Heart right ventricle (tissue), 16 donors: ENCODE measurements at regions of chr4 and their contacts with region 1.

Region 1: GRCh38 chr4:98467627-98468072 is 190.8 kb downstream of the TSPAN5 start:
- DNase-seq: peak; percentile 40 to 77
- ATAC-seq: peak; percentile 87 to 95 (median 91)
- H3K4me3 ChIP-seq: peak overlapping the region; percentile 24 to 53 (median 44)
- H3K27ac ChIP-seq: no peak overlapping the region
- H3K4me1 ChIP-seq: peaks cover 0 to 28% (median 17%) of the 10 kb centered on the region in 9 donors
- H3K27me3 ChIP-seq: no peaks in the 10 kb centered on the region
- CTCF ChIP-seq: peak; percentile 36 to 86 (median 75)

Region 2: GRCh38 chr4:98626350-98626749 is 158.7 kb after region 1 on chr4:
- intact Hi-C with region 1: loop called in 2 of 10 experiments (anchors 5 to 10 kb)
- DNase-seq: peak in 1 of 2 donors; percentile 19
- ATAC-seq: peak in 7 of 8 donors; percentile 53 to 76 (median 63)
- H3K4me3 ChIP-seq: no peak overlapping the region
- H3K27ac ChIP-seq: peak overlapping the region in 3 of 10 donors; percentile 1 to 17 (median 5)
- H3K4me1 ChIP-seq: peaks cover 0 to 33% (median 12%) of the 10 kb centered on the region in 9 donors
- H3K27me3 ChIP-seq: no peaks in the 10 kb centered on the region
- CTCF ChIP-seq: no peak

Region 3: DNA sequence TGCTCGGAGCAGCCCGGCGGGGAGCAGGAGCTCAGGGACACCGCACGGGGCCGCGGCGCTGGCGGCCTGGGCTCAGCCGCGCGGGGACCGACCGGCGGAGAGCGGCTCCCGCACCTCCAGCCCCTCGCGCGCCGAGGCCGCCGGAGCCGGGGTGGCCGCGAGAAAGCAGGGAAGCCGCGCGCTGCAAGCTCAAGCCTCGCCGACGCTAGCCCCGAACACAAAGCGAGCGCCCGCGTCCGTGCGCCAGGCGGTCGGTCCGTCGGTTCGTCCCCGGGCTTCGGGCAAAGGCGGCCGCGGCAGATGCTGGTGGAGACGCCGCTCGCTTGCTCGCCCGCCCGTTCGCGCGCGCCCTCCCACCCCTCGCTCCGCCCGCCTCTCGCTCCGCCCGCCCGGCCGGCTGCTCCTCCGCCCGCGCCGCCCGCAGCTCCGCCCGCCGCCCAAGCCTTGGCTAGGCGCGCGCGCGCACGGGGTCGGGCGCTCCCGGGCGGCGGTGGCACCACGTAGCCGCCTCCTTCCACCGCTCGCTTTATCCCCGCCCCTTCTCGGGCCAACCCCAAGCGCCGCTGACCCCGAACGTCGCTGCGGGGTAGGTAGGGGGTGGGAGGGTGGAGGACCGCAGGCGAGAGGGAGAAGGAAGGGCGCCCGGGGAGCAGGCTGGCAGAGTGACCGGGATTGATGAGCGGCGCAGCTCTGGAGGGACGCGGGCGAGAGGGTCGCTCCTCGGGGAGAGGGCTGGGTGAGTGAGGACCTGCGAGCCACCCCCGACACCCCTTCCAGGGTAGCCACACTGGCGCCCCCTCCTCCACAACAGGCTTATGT is 190.8 kb after region 1 on chr4 and contains the start of gene TSPAN5:
- intact Hi-C with region 1: loop called in 4 of 10 experiments (anchors 2 to 10 kb)
- DNase-seq: peak; percentile 69 to 82
- ATAC-seq: peak; percentile 90 to 97 (median 94)
- H3K4me3 ChIP-seq: peak within 1 kb of the TSS; percentile 37 to 91 (median 72)
- H3K27ac ChIP-seq: peak within 1 kb of the TSS in 9 of 10 donors; percentile 44 to 84 (median 68)
- H3K4me1 ChIP-seq: peaks cover 5 to 54% (median 19%) of the 10 kb centered on the region in 9 donors
- H3K27me3 ChIP-seq: peaks cover 0 to 36% (median 0%) of the 10 kb centered on the region in 7 donors
- CTCF ChIP-seq: no peak
- total RNA-seq, gene TSPAN5: 0.85 to 6.7 (median 4.4) TPM

Region 4: DNA sequence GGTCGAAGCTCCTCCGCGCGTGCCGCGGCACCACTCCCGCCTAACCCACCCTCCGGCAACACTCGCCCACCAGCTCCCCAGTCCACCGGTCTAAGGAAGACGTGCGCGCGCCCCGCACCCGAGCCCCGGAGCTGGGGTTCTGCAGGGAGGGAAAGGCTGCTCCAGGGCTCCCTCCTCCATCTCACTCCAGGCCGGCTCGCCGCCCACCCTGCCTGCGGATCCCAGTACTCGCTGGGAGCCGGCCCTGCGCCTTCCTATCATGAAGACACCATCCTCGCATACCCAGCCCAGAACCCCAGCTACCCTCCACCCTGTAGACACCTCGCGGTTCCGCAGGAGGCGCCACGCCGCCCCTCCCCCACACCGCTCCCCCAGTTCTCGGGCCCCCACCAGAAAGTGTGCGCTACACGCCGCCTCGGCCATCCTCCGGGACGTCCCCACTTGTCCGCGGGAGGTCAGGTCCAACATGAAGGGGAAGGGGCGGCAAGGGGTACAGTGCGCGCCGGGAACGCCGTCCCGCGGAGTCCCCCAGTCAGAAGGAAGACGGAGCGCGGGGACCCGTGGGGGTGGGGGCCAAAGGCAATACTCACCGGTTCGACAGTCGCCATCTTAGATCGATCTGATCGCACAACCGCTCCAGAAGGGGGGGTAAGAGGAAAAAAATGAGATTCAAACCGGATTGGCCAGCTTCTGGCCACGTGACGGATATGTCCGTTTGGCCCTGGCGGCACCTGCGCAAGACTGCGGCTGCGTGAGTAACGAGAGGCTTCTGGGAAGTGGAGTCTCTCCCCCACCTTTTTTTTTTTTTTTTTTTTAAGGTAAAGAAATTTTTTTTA is 461.1 kb after region 1 on chr4 and contains the start of gene EIF4E:
- intact Hi-C with region 1: loop called in 3 of 10 experiments (anchors 5 to 10 kb)
- DNase-seq: peak; percentile 97 to 98
- ATAC-seq: peak; percentile 91 to 98 (median 96)
- H3K4me3 ChIP-seq: peak within 1 kb of the TSS; percentile 82 to 97 (median 91)
- H3K27ac ChIP-seq: peak within 1 kb of the TSS; percentile 79 to 96 (median 93)
- H3K4me1 ChIP-seq: peaks cover 0 to 52% (median 24%) of the 10 kb centered on the region in 9 donors
- H3K27me3 ChIP-seq: no peaks in the 10 kb centered on the region
- CTCF ChIP-seq: peak in 6 of 9 donors; percentile 14 to 40 (median 32)
- total RNA-seq, gene EIF4E: 48.7 to 70.4 (median 58.4) TPM

Region 5: DNA sequence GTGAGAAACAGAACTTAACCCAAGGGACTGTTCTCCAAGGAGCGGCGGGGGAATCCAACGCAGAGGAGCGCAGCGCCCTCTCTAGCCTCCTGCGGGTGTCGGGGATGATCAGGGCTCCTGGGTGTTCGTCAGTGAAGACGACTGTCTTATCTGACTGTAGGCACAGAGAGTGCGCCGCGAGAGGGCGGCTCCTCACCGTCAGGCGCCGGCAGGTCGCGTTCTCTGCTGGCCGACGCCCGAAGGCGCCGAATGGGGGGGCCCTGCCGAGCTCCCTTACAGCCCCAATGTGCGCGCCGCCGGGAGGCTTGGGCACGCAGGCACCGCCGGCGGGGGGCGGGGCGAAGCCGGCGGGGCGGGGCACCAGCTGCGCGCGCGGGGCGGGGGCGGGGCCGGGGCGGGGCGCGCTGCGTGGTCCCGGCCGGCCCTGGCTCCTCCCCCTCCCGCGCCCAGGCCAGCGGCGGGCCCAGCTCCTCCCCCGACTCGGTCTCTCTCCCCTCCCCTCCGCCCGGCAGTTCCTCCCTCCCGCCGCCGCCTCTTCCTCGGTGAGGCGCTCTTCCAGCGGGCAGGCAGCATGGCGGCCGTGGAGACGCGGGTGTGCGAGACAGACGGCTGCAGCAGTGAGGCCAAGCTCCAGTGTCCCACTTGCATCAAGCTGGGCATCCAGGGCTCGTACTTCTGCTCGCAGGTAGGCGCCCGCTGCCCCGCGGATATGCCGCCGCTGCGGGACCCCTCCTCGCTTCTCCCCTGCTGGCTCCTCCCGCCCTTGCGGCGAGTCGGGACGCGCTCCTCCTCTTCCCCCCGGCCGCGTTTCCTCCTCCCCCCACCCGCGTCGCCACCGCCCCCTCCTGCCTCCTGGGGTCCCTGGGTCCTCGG is 527.8 kb after region 1 on chr4 and contains the start of gene METAP1:
- intact Hi-C with region 1: loop called in 1 of 10 experiments (anchors 5 kb)
- DNase-seq: peak; percentile 90 to 94
- ATAC-seq: peak; percentile 94 to 98 (median 96)
- H3K4me3 ChIP-seq: peak within 1 kb of the TSS; percentile 73 to 99 (median 96)
- H3K27ac ChIP-seq: peak within 1 kb of the TSS; percentile 86 to 95 (median 93)
- H3K4me1 ChIP-seq: peaks cover 0 to 28% (median 13%) of the 10 kb centered on the region in 9 donors
- H3K27me3 ChIP-seq: no peaks in the 10 kb centered on the region
- CTCF ChIP-seq: peak; percentile 5 to 80 (median 49)
- total RNA-seq, gene METAP1: 54.2 to 79.7 (median 60.9) TPM

Region 6: DNA sequence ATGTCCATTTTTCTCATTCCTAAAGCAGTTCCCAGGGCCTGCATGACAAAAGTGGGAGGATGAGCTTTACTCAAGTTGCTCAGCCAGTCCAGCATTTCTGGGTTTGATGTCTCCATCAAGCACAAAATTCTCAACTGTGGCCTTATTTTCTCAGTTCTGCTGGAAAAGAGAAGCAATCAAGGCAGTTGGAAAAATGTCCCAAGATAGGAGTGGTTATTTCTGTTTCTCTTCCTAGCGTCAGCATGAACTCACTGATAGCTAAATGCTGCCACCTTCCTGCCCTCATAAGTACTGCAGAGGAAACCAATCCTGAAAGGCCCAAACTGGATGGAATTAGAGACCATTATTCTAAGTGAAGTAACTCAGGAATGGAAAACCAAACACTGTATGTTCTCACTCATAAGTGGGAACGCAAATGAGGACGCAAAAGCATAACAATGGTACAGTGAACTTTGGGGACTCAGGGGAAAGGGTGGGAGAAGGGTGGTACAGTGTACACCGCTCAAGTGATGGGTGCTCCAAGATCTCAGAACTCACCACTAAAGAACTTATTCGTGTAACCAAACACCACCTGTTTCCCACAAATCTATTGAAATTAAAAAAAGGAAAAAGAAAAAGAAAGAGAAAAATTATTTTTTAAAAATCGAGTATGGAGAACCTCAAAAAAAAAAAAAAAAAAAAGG is 937.9 kb after region 1 on chr4:
- intact Hi-C with region 1: loop called in 3 of 10 experiments (anchors 5 to 10 kb)
- DNase-seq: peak; percentile 12 to 73
- ATAC-seq: peak; percentile 67 to 84 (median 78)
- H3K4me3 ChIP-seq: no peak overlapping the region
- H3K27ac ChIP-seq: peak overlapping the region in 8 of 10 donors; percentile 3 to 67 (median 56)
- H3K4me1 ChIP-seq: peaks cover 0 to 15% (median 8%) of the 10 kb centered on the region in 9 donors
- H3K27me3 ChIP-seq: no peaks in the 10 kb centered on the region
- CTCF ChIP-seq: peak; percentile 79 to 95 (median 94)